Activated CD4-positive, alpha-beta T cell treated with anti-CD3 and anti-CD28 coated beads for 36 hours (primary cell): ENCODE measurements at regions of chr5 and their contacts with region 1.

Region 1: GRCh38 chr5:66144074-66144833 is at the start of gene SREK1:
- DNase-seq: peak; percentile 95
- ATAC-seq: peak; percentile 90
- H3K4me3 Mint-ChIP-seq: peak within 1 kb of the TSS; percentile 96
- H3K27ac Mint-ChIP-seq: peak within 1 kb of the TSS; percentile 99
- H3K4me1 Mint-ChIP-seq: peaks cover 39% of the 10 kb centered on the region
- H3K27me3 Mint-ChIP-seq: no peaks in the 10 kb centered on the region
- total RNA-seq, gene SREK1: 56.1 to 61.3 TPM

Region 2: GRCh38 chr5:65262649-65263059 is 881.6 kb before region 1 on chr5:
- CTCF ChIA-PET with region 1: no interaction called
- POLR2A ChIA-PET with region 1: no interaction called
- intact Hi-C with region 1: no loop called
- DNase-seq: no peak
- ATAC-seq: no peak
- H3K4me3 Mint-ChIP-seq: no peak overlapping the region
- H3K27ac Mint-ChIP-seq: no peak overlapping the region
- H3K4me1 Mint-ChIP-seq: no peaks in the 10 kb centered on the region
- H3K27me3 Mint-ChIP-seq: peaks cover 2% of the 10 kb centered on the region

Region 3: DNA sequence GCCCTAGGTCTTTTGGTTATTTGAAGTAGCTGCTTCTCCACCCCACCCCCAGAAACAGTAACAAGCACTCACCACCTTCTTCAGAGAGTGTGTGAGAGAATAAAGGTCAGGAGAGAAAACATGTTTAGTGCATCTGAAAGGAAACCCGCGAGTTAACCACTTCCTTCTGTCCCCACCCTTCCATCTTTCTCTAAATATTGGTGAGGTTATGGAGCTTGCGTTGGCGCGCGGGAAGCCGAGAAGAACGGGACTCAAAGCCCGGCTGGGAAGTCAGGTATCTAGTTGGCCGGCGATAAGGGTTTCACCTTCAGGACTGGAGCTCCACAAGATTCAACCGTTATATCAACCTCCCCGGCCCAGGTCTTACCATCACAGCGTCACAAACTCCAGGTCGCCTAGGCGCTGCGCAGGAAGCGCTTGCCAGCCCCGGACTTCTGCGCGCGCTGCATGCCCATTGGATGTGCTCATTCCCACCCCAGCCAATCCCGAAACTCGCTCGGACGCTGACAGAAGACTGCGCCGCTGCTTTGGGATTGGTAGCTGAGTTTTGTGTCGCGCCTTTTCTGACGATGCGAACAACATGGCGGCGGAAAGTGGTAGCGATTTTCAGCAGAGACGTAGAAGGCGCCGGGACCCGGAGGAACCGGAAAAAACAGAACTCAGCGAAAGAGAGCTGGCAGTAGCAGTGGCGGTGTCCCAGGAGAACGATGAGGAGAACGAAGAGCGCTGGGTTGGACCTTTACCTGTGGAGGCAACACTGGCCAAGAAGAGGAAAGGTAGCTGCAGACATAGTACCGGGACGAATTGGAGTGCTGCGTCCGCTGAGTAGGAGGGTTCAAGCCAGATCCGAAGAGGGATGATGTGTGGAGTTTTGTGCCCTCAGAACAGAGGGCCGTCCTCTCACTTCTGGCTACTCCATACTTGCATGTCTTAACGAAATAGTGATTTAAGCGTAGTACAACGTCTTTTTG is 581.2 kb before region 1 on chr5 and contains the starts of genes CENPK and PPWD1:
- CTCF ChIA-PET with region 1: no interaction called
- POLR2A ChIA-PET with region 1: no interaction called
- intact Hi-C with region 1: loop called (anchors 1 to 10 kb)
- DNase-seq: peak; percentile 98
- ATAC-seq: peak; percentile 99
- H3K4me3 Mint-ChIP-seq: peak within 1 kb of the TSS; percentile 91
- H3K27ac Mint-ChIP-seq: peak within 1 kb of the TSS; percentile 98
- H3K4me1 Mint-ChIP-seq: peaks cover 47% of the 10 kb centered on the region
- H3K27me3 Mint-ChIP-seq: no peaks in the 10 kb centered on the region
- total RNA-seq, gene CENPK: 70.5 to 77.5 TPM
- total RNA-seq, gene PPWD1: 43.0 to 44.0 TPM

Region 4: DNA sequence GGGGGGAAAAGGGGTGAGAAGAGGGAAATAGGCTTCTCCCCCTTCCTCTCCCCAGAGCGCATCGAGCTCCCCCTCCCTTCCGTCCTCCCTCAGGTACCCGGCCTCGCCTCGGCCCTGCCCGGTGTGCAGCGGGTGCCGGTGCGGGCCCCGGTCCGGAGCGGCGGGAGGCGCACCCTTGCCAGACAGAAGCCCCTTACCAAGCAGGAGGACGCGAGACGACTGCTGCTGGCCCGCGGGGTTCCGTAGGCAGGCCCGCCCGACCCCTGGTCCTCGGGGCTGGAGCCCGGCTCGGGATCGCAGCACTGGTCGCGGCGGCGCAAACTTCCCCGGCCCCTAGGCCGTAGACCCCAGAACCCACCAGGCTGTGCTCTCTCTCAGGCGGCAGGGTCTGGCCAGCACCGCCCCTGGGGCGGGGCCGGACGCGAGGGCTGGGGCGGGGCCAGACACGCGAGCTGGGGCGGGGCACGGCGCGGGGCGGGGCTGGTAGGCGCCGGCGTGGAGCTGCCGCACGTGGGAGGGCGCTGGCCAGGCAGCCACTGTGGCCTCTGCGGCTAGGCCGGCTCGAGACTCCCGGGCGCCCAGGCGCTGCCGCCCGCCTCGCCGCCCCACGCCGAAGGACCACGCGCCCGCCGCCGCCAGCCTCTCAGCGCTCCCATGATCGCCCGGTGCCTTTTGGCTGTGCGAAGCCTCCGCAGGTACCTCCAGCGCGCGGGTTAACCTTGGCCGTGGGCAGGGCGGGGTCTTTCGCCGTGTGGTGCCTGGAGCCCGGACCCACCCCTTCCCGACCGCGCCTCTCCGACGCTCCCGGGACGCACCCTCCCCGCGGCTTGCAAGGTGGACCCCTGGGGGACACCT is 422.3 kb before region 1 on chr5 and contains the starts of genes NLN and SGTB:
- CTCF ChIA-PET with region 1: no interaction called
- POLR2A ChIA-PET with region 1: interaction called, 3 read pairs
- intact Hi-C with region 1: loop called in 1 of 2 experiments (anchors 1 kb)
- DNase-seq: peak; percentile 91
- ATAC-seq: peak; percentile 91
- H3K4me3 Mint-ChIP-seq: peak within 1 kb of the TSS; percentile 94
- H3K27ac Mint-ChIP-seq: peak within 1 kb of the TSS; percentile 93
- H3K4me1 Mint-ChIP-seq: peaks cover 20% of the 10 kb centered on the region
- H3K27me3 Mint-ChIP-seq: no peaks in the 10 kb centered on the region
- total RNA-seq, gene NLN: 30.9 to 33.8 TPM
- total RNA-seq, gene SGTB: 18.0 TPM

Region 5: DNA sequence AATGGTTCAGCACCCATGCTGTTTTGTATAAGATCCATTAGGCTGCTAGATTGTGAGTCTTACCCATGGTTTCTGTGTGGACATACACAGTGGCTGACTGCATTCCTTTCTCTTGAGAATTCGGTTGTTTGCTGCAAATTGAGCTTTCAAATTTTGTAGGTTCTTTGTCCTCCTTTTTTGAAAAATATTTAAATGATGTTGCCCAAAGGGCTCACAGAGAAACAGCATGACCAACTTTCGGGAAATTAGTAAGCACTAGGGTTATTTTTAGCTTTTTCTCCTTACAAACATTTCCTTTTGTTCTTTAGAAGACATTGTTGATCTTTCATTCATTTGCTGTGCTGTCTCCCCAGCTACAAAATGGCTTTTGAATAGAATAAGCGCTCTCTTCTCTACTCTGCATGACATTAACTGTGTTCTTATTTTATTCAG is 342.9 kb before region 1 on chr5:
- CTCF ChIA-PET with region 1: no interaction called
- POLR2A ChIA-PET with region 1: no interaction called
- intact Hi-C with region 1: loop called in 1 of 2 experiments (anchors 5 kb)
- DNase-seq: no peak
- ATAC-seq: no peak
- H3K4me3 Mint-ChIP-seq: no peak overlapping the region
- H3K27ac Mint-ChIP-seq: no peak overlapping the region
- H3K4me1 Mint-ChIP-seq: peaks cover 37% of the 10 kb centered on the region
- H3K27me3 Mint-ChIP-seq: peaks cover 2% of the 10 kb centered on the region

Region 6: GRCh38 chr5:66171349-66172344 is 27.4 kb after region 1 on chr5:
- CTCF ChIA-PET with region 1: interaction called, 3 read pairs
- POLR2A ChIA-PET with region 1: no interaction called
- intact Hi-C with region 1: loop called in 1 of 2 experiments (anchors 1 kb)
- DNase-seq: peak; percentile 61
- ATAC-seq: peak; percentile 56
- H3K4me3 Mint-ChIP-seq: no peak overlapping the region
- H3K27ac Mint-ChIP-seq: no peak overlapping the region
- H3K4me1 Mint-ChIP-seq: peaks cover 28% of the 10 kb centered on the region
- H3K27me3 Mint-ChIP-seq: no peaks in the 10 kb centered on the region

Region 7: GRCh38 chr5:66406761-66407336 is 262.6 kb after region 1 on chr5:
- CTCF ChIA-PET with region 1: no interaction called
- POLR2A ChIA-PET with region 1: no interaction called
- intact Hi-C with region 1: no loop called
- DNase-seq: no peak
- ATAC-seq: no peak
- H3K4me3 Mint-ChIP-seq: no peak overlapping the region
- H3K27ac Mint-ChIP-seq: no peak overlapping the region
- H3K4me1 Mint-ChIP-seq: no peaks in the 10 kb centered on the region
- H3K27me3 Mint-ChIP-seq: peaks cover 15% of the 10 kb centered on the region

Region 8: DNA sequence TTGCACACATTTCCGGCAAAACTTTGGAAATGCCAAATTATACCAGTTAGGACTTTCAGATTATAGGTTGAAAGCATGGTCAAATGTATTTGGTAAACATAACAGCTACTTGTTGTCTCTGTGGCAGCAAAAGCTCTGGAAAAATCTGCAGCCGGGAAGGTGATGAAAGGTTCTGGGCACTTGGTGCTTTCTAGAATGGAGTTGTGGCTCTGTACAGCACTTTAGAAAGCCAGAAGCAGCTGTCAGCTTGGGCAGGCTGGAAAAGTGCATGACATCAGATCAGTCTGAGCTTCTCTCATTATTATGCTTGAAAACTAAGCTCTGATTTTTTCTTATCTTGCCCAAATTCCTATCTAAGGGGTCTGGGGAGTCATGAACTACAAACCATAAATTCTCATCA is 333.3 kb after region 1 on chr5:
- CTCF ChIA-PET with region 1: no interaction called
- POLR2A ChIA-PET with region 1: no interaction called
- intact Hi-C with region 1: no loop called
- DNase-seq: no peak
- ATAC-seq: no peak
- H3K4me3 Mint-ChIP-seq: no peak overlapping the region
- H3K27ac Mint-ChIP-seq: no peak overlapping the region
- H3K4me1 Mint-ChIP-seq: no peaks in the 10 kb centered on the region
- H3K27me3 Mint-ChIP-seq: peaks cover 8% of the 10 kb centered on the region